ENCODE measurements at regions of chr2 and their contacts with region 1.

Region 1: GRCh38 chr2:173221937-173222594 is 132.6 kb upstream of the CDCA7 start:
- DNase-seq: no peak
- ATAC-seq: no peak

Region 2: DNA sequence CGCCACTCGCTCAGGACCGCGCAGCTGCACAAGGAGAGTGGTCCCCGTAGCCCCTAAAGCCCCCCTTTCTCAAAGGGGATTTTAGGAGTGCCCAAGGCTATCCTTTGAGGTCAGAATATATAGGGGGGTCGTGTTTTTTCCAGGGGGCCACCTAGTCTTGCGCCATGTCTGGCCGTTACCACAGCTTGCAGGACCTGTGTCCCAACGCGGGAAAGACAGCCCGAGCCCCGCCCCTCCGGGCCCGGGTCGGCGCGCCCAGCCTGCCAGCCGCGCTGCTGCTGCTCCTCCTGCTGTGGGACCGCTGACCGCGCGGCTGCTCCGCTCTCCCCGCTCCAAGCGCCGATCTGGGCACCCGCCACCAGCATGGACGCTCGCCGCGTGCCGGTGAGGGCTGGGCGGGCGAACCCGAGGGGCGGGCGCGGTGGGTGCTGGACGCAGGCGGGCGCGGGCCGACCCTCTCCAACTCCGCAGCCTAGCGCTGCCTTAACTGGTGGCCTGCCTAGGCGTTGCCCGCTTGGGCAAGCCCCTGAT is 132.6 kb after region 1 on chr2 and contains the start of gene CDCA7:
- intact Hi-C with region 1: loop called (anchors 5 kb)
- DNase-seq: peak; percentile 77
- ATAC-seq: peak; percentile 90
- total RNA-seq, gene CDCA7: 1.5 TPM